ENCODE measurements at regions of chr10 and their contacts with region 1.

Region 1: GRCh38 chr10:5446390-5446926 is 34.1 kb downstream of the NET1 start:
- DNase-seq: peak; percentile 77
- H3K4me3 Mint-ChIP-seq: peak overlapping the region; percentile 61
- H3K27ac Mint-ChIP-seq: peak overlapping the region; percentile 33
- H3K4me1 Mint-ChIP-seq: peaks cover 48% of the 10 kb centered on the region
- H3K27me3 Mint-ChIP-seq: no peaks in the 10 kb centered on the region

Region 2: DNA sequence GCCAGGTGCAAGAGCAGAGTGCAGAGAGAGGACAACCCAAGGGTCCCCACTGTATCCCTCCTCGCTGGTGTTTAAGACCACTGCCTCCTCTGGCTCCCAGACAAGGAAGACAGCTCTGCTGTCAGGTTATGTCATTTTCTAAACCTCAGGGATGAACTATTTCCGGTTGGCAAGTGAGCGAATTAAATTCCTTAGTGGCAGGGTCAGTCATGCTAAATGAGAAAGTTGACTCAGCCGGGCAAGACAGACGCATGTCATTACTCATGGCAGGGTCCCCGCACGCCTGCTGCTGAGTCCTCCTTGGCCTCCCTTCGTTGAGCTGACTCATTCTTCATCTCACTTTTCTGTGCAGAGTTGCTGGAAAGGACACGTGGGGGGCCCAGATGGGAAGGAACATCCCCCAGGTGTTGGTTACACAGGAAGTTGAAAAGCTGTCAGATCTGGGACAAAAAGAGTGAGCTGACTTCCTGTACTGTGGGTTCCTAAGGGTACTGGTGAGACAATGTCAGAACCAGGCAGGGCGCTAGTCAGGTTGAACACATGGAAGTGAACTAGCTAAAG is 128.8 kb before region 1 on chr10:
- CTCF ChIA-PET with region 1: no interaction called
- intact Hi-C with region 1: loop called (anchors 2 kb)
- DNase-seq: peak; percentile 96
- H3K4me3 Mint-ChIP-seq: peak overlapping the region; percentile 28
- H3K27ac Mint-ChIP-seq: peak overlapping the region; percentile 89
- H3K4me1 Mint-ChIP-seq: peaks cover 73% of the 10 kb centered on the region
- H3K27me3 Mint-ChIP-seq: no peaks in the 10 kb centered on the region

Region 3: GRCh38 chr10:5548527-5549223 is 102.2 kb after region 1 on chr10:
- CTCF ChIA-PET with region 1: interaction called, 6 read pairs
- intact Hi-C with region 1: loop called (anchors 2 kb)
- DNase-seq: peak; percentile 78
- H3K4me3 Mint-ChIP-seq: no peak overlapping the region
- H3K27ac Mint-ChIP-seq: no peak overlapping the region
- H3K4me1 Mint-ChIP-seq: peaks cover 30% of the 10 kb centered on the region
- H3K27me3 Mint-ChIP-seq: no peaks in the 10 kb centered on the region

Region 4: DNA sequence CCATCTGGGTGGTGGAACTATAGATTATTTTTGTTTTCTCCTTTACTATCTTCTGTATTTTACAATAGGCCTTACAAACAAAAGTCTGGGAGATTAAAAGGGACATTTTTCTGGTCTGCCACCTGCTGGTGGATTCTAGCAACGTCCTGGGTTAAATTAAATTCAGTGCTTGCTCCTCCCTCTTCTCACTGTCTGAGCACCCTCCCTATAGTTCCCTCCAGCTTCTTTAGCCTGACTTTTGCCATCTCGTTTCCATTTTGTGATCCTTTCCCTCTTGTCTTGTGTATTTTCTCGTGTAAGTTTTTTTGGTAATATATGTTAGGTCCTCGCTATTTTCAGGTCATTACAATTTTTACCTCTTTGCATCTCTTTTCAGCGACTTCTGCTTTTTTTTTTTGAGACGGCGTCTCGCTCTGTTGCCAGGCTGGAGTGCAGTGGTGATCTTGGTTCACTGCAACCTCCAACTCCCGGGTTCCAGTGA is 427.1 kb after region 1 on chr10:
- CTCF ChIA-PET with region 1: no interaction called
- intact Hi-C with region 1: loop called (anchors 1 kb)
- DNase-seq: peak; percentile 85
- H3K4me3 Mint-ChIP-seq: peak overlapping the region; percentile 44
- H3K27ac Mint-ChIP-seq: no peak overlapping the region
- H3K4me1 Mint-ChIP-seq: peaks cover 3% of the 10 kb centered on the region
- H3K27me3 Mint-ChIP-seq: no peaks in the 10 kb centered on the region

Measured in activated naive CD4-positive, alpha-beta T cell treated with anti-CD3 and anti-CD28 coated beads for 36 hours (primary cell).